PC-3 (cell line): ENCODE measurements at regions of chr2 and their contacts with region 1.

Region 1: GRCh38 chr2:177552422-177553175 is 160.0 kb downstream of the AGPS start:
- DNase-seq: peak; percentile 82
- ATAC-seq: peak; percentile 96
- H3K4me3 ChIP-seq: peak overlapping the region; percentile 94
- H3K27ac ChIP-seq: peak overlapping the region; percentile 89
- H3K4me1 ChIP-seq: peaks cover 5% of the 10 kb centered on the region; the same call in 1 of the 2 replicates
- H3K27me3 ChIP-seq: no peaks in the 10 kb centered on the region
- CTCF ChIP-seq: no peak

Region 2: GRCh38 chr2:177108890-177109289 is 443.7 kb before region 1 on chr2:
- CTCF ChIA-PET with region 1: no interaction called
- POLR2A ChIA-PET with region 1: no interaction called
- intact Hi-C with region 1: no loop called
- DNase-seq: no peak
- ATAC-seq: no peak
- H3K4me3 ChIP-seq: no peak overlapping the region
- H3K27ac ChIP-seq: no peak overlapping the region
- H3K4me1 ChIP-seq: no peaks in the 10 kb centered on the region
- H3K27me3 ChIP-seq: peaks cover 36% of the 10 kb centered on the region
- CTCF ChIP-seq: no peak

Region 3: GRCh38 chr2:177520356-177520723 is 32.3 kb before region 1 on chr2:
- CTCF ChIA-PET with region 1: no interaction called
- POLR2A ChIA-PET with region 1: no interaction called
- intact Hi-C with region 1: no loop called
- DNase-seq: no peak
- ATAC-seq: no peak
- H3K4me3 ChIP-seq: no peak overlapping the region
- H3K27ac ChIP-seq: no peak overlapping the region
- H3K4me1 ChIP-seq: peaks cover 14% of the 10 kb centered on the region
- H3K27me3 ChIP-seq: no peaks in the 10 kb centered on the region
- CTCF ChIP-seq: no peak

Region 4: GRCh38 chr2:177618255-177619253 is 66.0 kb after region 1 on chr2:
- CTCF ChIA-PET with region 1: no interaction called
- POLR2A ChIA-PET with region 1: no interaction called
- intact Hi-C with region 1: loop called (anchors 1 kb)
- DNase-seq: peak; percentile 83
- ATAC-seq: peak; percentile 94
- H3K4me3 ChIP-seq: peak overlapping the region; percentile 82
- H3K27ac ChIP-seq: peak overlapping the region; percentile 86
- H3K4me1 ChIP-seq: 0 out of 2 replicates have a peak, but pooled peaks cover 5% of the 10 kb centered on the region
- H3K27me3 ChIP-seq: no peaks in the 10 kb centered on the region
- CTCF ChIP-seq: no peak